Heart right ventricle (tissue), 16 donors: ENCODE measurements at regions of chr12 and their contacts with region 1.

Region 1: GRCh38 chr12:117212563-117213190 is 22.4 kb upstream of the FBXO21 start:
- DNase-seq: peak; percentile 39 to 74
- ATAC-seq: peak in 6 of 8 donors; percentile 54 to 90 (median 80)
- H3K4me3 ChIP-seq: no peak overlapping the region
- H3K27ac ChIP-seq: no peak overlapping the region
- H3K4me1 ChIP-seq: no peaks in the 10 kb centered on the region
- H3K27me3 ChIP-seq: peaks cover 0 to 59% (median 15%) of the 10 kb centered on the region in 7 donors
- CTCF ChIP-seq: peak; percentile 72 to 93 (median 87)

Region 2: GRCh38 chr12:117255386-117255785 is 42.7 kb after region 1 on chr12:
- intact Hi-C with region 1: no loop called
- DNase-seq: no peak
- ATAC-seq: no peak
- H3K4me3 ChIP-seq: no peak overlapping the region
- H3K27ac ChIP-seq: no peak overlapping the region
- H3K4me1 ChIP-seq: no peaks in the 10 kb centered on the region
- H3K27me3 ChIP-seq: peaks cover 0 to 8% (median 0%) of the 10 kb centered on the region in 7 donors
- CTCF ChIP-seq: no peak

Region 3: GRCh38 chr12:117367011-117367638 is 154.4 kb after region 1 on chr12:
- intact Hi-C with region 1: loop called in 1 of 10 experiments (anchors 5 kb)
- DNase-seq: peak in 1 of 2 donors; percentile 66
- ATAC-seq: peak in 6 of 8 donors; percentile 36 to 73 (median 55)
- H3K4me3 ChIP-seq: no peak overlapping the region
- H3K27ac ChIP-seq: no peak overlapping the region
- H3K4me1 ChIP-seq: no peaks in the 10 kb centered on the region
- H3K27me3 ChIP-seq: peaks cover 0 to 58% (median 42%) of the 10 kb centered on the region in 7 donors
- CTCF ChIP-seq: peak; percentile 77 to 93 (median 87)

Region 4: GRCh38 chr12:117587631-117588287 is 375.1 kb after region 1 on chr12:
- intact Hi-C with region 1: loop called in 3 of 10 experiments (anchors 5 to 10 kb)
- DNase-seq: peak; percentile 18 to 36
- ATAC-seq: peak in 5 of 8 donors; percentile 38 to 73 (median 67)
- H3K4me3 ChIP-seq: no peak overlapping the region
- H3K27ac ChIP-seq: no peak overlapping the region
- H3K4me1 ChIP-seq: no peaks in the 10 kb centered on the region
- H3K27me3 ChIP-seq: peaks cover 0 to 54% (median 37%) of the 10 kb centered on the region in 7 donors
- CTCF ChIP-seq: peak; percentile 62 to 88 (median 81)

Region 5: DNA sequence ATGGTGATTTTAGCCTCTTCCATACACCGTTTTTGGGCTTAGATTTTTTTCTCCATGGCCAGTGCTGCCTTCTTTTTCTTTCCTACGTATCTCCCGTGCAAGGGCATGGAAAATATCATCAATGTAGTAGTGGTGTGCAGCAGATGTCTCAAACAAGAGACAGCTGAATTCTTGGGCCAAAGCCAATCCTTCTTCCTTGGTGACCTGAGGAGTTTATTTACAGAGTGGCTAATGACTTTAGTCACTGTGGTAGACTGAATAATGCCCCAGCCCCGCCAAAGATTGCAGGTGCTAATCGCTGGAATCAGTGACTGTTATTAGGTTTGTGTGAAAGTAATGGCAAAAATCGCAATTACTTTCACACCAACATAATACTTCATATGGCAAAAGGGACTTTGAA is 384.3 kb after region 1 on chr12:
- intact Hi-C with region 1: loop called in 1 of 10 experiments (anchors 10 kb)
- DNase-seq: no peak
- ATAC-seq: no peak
- H3K4me3 ChIP-seq: no peak overlapping the region
- H3K27ac ChIP-seq: no peak overlapping the region
- H3K4me1 ChIP-seq: no peaks in the 10 kb centered on the region
- H3K27me3 ChIP-seq: peaks cover 0 to 44% (median 12%) of the 10 kb centered on the region in 7 donors
- CTCF ChIP-seq: no peak

Region 6: DNA sequence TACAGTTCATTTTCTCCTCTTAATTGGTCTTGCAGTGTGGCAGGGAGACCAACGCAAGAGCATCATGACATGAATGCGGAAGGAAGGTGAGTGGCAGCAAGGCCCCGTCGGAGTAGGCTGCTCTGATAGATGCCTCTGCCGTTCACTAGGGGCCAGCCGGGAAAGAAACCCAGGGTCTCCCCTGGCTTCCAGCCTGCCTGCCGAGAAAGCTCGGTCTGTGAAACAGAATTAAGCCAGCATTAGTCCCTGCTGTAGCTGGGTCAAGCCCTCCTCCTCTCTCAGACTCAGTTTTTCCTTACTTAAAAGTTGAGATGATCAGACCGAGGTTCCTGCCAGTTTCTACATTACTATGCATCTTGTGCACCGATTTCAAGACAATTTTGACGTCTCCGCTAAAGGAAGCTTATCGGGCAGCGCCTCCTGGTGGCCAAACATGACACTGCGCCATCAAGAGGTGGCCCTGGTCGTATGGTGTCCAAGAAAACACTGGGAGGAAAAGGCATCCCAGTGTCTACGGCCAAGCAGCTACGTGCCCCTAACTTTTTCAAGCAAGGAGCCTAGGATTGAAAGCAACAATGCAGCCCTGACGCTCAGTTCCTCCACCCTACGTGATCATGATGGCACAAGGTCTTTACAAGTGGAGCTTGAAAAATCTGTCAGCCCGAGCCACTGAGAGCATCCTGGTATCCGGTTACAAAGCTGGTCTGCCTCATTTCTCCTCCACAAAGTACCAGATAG is 624.5 kb after region 1 on chr12:
- intact Hi-C with region 1: loop called in 9 of 10 experiments (anchors 1 to 5 kb)
- DNase-seq: peak; percentile 56 to 75
- ATAC-seq: peak; percentile 29 to 73 (median 59)
- H3K4me3 ChIP-seq: no peak overlapping the region
- H3K27ac ChIP-seq: no peak overlapping the region
- H3K4me1 ChIP-seq: peaks cover 0 to 3% (median 0%) of the 10 kb centered on the region in 9 donors
- H3K27me3 ChIP-seq: peaks cover 0 to 83% (median 56%) of the 10 kb centered on the region in 7 donors
- CTCF ChIP-seq: peak; percentile 84 to 97 (median 94)

Region 7: DNA sequence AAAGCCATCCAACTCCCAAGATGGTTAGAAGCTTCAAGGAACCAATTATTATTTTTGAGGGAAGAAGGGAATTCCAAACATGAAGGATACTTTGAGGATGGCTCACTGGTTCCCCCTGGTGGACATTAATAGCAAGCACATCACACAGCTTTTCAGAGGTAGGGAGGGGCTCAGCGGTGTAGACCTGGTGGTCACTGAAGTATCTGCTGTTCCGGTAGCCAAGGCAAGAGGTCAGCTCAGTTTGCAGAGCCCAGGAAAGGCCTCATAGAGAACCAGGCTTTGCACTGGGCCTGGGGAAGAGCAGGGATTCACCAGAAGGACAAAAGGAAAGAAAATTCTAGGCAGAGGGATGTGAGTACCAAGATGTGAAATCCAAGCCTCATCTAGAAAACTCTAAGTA is 637.4 kb after region 1 on chr12:
- intact Hi-C with region 1: loop called in 2 of 10 experiments (anchors 5 kb)
- DNase-seq: no peak
- ATAC-seq: peak in 1 of 8 donors; percentile 41
- H3K4me3 ChIP-seq: no peak overlapping the region
- H3K27ac ChIP-seq: no peak overlapping the region
- H3K4me1 ChIP-seq: no peaks in the 10 kb centered on the region
- H3K27me3 ChIP-seq: peaks cover 0 to 51% (median 33%) of the 10 kb centered on the region in 7 donors
- CTCF ChIP-seq: peak; percentile 65 to 88 (median 77)